Dorsolateral prefrontal cortex (tissue), 120 donors: ENCODE measurements at regions of chr14 and their contacts with region 1.

Region 1: DNA sequence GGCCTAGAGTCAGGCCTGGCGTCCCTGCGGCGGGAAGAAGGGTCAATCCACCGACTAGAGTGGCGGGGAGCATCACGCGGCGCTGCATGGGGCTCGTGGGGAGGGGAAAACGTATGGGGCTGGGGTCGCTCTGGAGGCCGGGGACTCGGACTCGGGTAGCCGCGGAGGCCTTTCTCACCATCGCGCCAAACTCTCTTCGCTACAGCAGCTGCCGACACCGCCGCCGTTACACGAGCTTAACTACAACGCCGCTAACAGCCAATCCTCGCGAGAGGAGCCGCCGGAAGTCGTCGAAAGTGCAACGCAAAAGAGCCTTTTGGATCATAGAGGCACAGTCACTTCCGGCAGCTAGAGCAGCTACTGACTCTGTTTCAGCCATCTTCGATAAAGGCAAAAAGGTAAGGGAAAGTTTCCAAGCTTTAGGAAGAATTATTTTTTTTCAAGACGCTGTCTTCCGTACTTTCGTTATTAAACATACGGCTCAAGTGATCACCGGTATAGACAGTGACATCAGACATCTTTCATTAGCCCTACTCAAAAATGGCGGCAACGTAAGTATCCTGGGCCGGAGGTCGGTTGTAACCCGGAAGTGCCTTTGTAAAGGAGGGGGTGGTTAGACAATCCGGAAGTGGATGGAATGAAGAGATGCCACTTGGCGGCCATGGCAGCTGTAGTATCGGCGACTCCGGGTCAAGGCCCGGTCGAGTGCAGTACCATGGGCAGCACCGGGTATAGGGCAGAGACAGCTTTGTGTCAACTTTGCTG is at the starts of genes ERH and SLC39A9:
- DNase-seq: peak; percentile 94 to 99 (median 97)
- H3K4me3 ChIP-seq: peak within 1 kb of the TSS; percentile 71 to 99 (median 92)
- H3K27ac ChIP-seq: peak within 1 kb of the TSS; percentile 44 to 98 (median 94)
- H3K27me3 ChIP-seq: no peaks in the 10 kb centered on the region
- CTCF ChIP-seq: peak in 33 of 56 donors; percentile 3 to 57 (median 22)
- total RNA-seq, gene ERH: 83.1 to 190 (median 136) TPM
- total RNA-seq, gene SLC39A9: 40.0 to 65.1 (median 52.3) TPM

Region 2: DNA sequence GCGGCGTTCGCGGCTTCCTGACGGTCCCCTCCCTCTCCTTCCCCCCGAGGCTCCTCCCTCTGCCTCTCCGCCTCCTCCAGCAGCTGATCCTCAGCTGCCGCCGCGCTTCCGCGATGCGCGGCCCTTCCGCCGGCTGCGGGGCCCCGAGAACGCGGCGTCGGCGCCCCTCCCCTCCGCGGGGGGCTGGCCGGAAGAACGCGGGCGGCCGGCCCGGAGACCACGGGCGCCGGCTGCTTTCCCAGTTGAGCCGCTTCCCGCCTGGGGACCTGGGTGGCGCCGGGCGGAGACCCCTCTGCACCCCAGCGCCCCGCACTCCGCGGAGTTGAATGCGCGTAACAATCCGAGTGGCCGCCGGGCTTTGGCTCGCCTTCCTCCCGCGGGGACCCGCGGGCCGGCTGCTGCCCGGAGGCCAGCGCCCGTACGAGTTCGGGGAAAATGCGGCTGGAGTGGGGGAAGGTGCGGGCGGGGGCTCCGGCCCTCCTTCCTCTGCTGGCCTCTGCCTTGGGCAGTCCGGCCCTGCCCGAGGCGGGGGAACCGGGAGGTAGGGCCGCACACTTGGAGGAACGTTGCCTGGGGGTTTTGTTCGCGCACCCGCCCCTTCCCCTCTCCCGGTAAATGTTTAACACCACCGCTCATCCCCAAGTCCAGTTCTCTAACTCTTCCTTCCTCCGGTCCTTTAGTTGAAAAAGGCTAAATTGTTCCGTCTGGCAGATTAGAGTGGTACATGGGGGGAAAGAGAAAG is 244.9 kb before region 1 on chr14:
- intact Hi-C with region 1: loop called in 1 of 2 experiments (anchors 2 kb)
- DNase-seq: peak; percentile 69 to 91 (median 88)
- H3K4me3 ChIP-seq: peak overlapping the region; percentile 57 to 99 (median 92)
- H3K27ac ChIP-seq: peak overlapping the region; percentile 47 to 96 (median 91)
- H3K27me3 ChIP-seq: no peaks in the 10 kb centered on the region
- CTCF ChIP-seq: peak in 9 of 56 donors; percentile 14 to 40 (median 22)

Region 3: GRCh38 chr14:69191340-69192111 is 206.7 kb before region 1 on chr14 and contains the start of gene EXD2:
- intact Hi-C with region 1: loop called (anchors 2 to 5 kb)
- DNase-seq: peak; percentile 72 to 95 (median 92)
- H3K4me3 ChIP-seq: peak within 1 kb of the TSS; percentile 66 to 99 (median 88)
- H3K27ac ChIP-seq: peak within 1 kb of the TSS in 55 of 59 donors; percentile 3 to 88 (median 63)
- H3K27me3 ChIP-seq: no peaks in the 10 kb centered on the region
- CTCF ChIP-seq: peak in 24 of 56 donors; percentile 9 to 48 (median 18)
- total RNA-seq, gene EXD2: 32.8 to 68.9 (median 44.5) TPM

Region 4: DNA sequence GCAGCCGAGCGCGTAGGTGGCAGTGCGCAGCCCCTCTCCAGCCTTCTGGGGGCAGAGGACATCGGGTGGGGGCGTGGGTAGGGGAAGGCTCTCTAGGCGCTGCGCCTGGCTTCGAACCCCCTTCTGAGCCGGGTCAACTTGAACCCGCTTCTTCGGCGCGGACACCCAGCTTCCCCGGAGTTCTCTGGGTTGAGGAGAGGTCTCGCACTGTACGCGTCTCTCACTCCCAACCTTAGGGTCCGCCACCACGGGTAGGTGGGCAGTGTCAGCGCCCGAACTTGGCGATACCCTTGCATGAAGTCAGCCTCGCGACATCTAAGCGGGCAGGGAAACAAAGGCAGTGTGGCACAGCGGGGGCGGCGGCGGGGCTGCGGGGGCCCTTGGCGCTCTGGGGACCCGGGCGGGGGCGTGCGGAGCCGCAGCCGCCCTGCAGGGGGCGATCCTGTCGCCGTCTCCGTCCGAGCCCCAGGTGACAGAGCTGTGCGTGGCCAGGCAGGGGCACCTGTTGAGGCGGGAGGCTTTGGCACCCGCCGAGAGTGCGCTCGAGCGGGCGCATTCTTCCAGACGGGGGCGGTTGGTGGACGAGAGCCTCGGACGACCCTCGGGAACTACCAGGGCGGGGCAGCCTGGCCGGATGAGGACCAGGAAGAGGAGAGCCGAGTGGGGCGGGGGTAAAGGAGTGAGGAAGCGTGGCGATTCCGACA is 137.2 kb before region 1 on chr14:
- intact Hi-C with region 1: loop called in 1 of 2 experiments (anchors 10 kb)
- DNase-seq: peak in 3 of 10 donors; percentile 51 to 58 (median 51)
- H3K4me3 ChIP-seq: peak overlapping the region; percentile 43 to 85 (median 70)
- H3K27ac ChIP-seq: peak overlapping the region in 4 of 59 donors; percentile 7 to 69 (median 35)
- H3K27me3 ChIP-seq: peaks cover 0 to 25% (median 0%) of the 10 kb centered on the region in 45 donors
- CTCF ChIP-seq: peak in 54 of 56 donors; percentile 34 to 76 (median 60)

Region 5: GRCh38 chr14:69460093-69460701 is 62.0 kb after region 1 on chr14:
- intact Hi-C with region 1: loop called in 1 of 2 experiments (anchors 5 kb)
- DNase-seq: peak in 9 of 10 donors; percentile 50 to 77 (median 62)
- H3K4me3 ChIP-seq: no peak overlapping the region
- H3K27ac ChIP-seq: no peak overlapping the region
- H3K27me3 ChIP-seq: no peaks in the 10 kb centered on the region
- CTCF ChIP-seq: peak; percentile 64 to 91 (median 78)